GM12878 (cell line): ENCODE measurements at regions of chr16 and their contacts with region 1.

Region 1: DNA sequence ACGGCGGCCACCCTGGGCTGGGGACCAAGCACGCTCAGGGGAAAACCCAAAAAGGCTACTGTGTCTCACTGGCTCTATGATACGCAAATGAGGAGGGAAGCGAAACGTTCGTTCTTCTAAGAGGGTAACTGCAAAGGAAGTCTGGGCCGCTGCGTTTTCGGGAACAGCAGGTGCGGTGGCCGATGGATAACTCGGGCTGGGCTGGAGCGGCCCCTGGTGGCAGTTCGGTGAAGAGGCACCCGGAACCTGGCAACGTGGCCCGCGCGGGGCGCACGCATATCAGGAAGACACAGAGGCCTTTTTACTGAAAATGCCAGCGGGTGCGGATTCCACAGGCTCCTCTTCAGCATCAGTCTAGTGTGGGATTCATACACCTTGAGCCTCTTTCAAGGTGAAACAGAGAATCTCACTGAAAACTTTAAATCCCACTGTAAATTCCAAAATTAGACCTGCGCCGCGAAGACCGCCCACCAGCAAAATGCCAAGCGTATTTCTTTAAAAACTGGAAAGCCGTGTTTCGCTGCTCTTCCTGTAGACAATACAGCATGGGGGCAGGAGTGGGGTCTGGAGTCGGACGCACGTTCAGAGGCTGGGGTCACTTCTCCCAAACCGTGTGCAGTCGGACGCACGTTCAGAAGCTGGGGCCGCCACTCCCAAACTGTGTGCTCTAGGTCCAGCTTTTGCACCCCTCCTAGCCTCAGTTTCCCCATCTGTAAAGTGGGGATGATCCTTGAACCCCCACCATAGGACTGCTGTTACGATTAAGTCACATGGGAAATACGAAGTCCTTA is 44.4 kb upstream of the METTL9 start:
- DNase-seq: peak; percentile 96
- ATAC-seq: peak; percentile 99
- H3K4me3 ChIP-seq: peak overlapping the region; percentile 25; the same call in 1 of the 2 replicates
- H3K27ac ChIP-seq: peak overlapping the region; percentile 43; the same call in 1 of the 2 replicates
- H3K4me1 ChIP-seq: peaks cover 8% of the 10 kb centered on the region
- H3K27me3 ChIP-seq: no peaks in the 10 kb centered on the region
- CTCF ChIP-seq: peak; percentile 98 to 100 (median 99)
- EP300 ChIP-seq: peak in 1 of 2 experiments; percentile 84; a peak in 2 of 4 replicates
- POLR2A ChIP-seq: no peak
- RAD21 ChIP-seq: peak; percentile 99

Region 2: DNA sequence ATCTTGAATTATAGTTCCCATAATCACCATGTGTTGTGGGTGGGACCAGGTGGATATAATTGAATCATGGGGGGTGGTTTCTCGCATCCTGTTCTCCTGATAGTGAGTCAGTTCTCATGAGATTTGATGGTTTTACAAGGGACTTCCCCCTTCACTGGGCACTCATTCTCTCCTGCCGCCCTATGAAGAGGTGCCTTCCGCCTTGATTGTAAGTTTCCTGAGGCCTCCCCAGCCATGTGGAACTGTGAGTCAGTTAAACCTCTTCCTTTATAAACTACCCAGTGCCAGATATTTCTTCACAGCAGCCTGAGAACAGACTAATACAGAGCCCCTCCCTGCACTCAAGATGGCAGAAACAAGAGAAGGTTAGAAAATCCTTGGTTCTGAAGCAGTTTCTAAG is 370.2 kb before region 1 on chr16:
- CTCF ChIA-PET with region 1: interaction called, 9 read pairs
- POLR2A ChIA-PET with region 1: no interaction called
- RAD21 ChIA-PET with region 1: interaction called, 3 read pairs
- SMC1A ChIA-PET with region 1: interaction called, 3 read pairs
- in situ Hi-C with region 1: loop called (anchors 5 kb)
- intact Hi-C with region 1: loop called (anchors 2 kb)
- DNase-seq: no peak
- ATAC-seq: no peak
- H3K4me3 ChIP-seq: no peak overlapping the region
- H3K27ac ChIP-seq: no peak overlapping the region
- H3K4me1 ChIP-seq: peaks cover 6% of the 10 kb centered on the region
- H3K27me3 ChIP-seq: no peaks in the 10 kb centered on the region
- CTCF ChIP-seq: no peak
- EP300 ChIP-seq: no peak
- POLR2A ChIP-seq: no peak
- RAD21 ChIP-seq: no peak

Region 3: GRCh38 chr16:21300309-21301167 is 254.5 kb before region 1 on chr16:
- CTCF ChIA-PET with region 1: interaction called, 5 read pairs
- POLR2A ChIA-PET with region 1: no interaction called
- RAD21 ChIA-PET with region 1: interaction called, 5 read pairs
- SMC1A ChIA-PET with region 1: interaction called, 4 read pairs
- in situ Hi-C with region 1: loop called (anchors 10 kb)
- intact Hi-C with region 1: loop called (anchors 2 kb)
- DNase-seq: peak; percentile 93
- ATAC-seq: peak; percentile 75
- H3K4me3 ChIP-seq: peak overlapping the region; percentile 90
- H3K27ac ChIP-seq: peak overlapping the region; percentile 54
- H3K4me1 ChIP-seq: no peaks in the 10 kb centered on the region
- H3K27me3 ChIP-seq: no peaks in the 10 kb centered on the region
- CTCF ChIP-seq: peak; percentile 71 to 97 (median 77)
- EP300 ChIP-seq: no peak
- POLR2A ChIP-seq: no peak
- RAD21 ChIP-seq: peak; percentile 86

Region 4: GRCh38 chr16:21598206-21598982 is 43.4 kb after region 1 on chr16:
- CTCF ChIA-PET with region 1: no interaction called
- POLR2A ChIA-PET with region 1: no interaction called
- RAD21 ChIA-PET with region 1: no interaction called
- SMC1A ChIA-PET with region 1: no interaction called
- in situ Hi-C with region 1: no loop called
- intact Hi-C with region 1: no loop called
- DNase-seq: no peak
- ATAC-seq: no peak; the same call in 2 of the 3 replicates
- H3K4me3 ChIP-seq: peak overlapping the region; percentile 77
- H3K27ac ChIP-seq: peak overlapping the region; percentile 84
- H3K4me1 ChIP-seq: 0 out of 2 replicates have a peak, but pooled peaks cover 3% of the 10 kb centered on the region
- H3K27me3 ChIP-seq: no peaks in the 10 kb centered on the region
- CTCF ChIP-seq: no peak
- EP300 ChIP-seq: no peak
- POLR2A ChIP-seq: no peak
- RAD21 ChIP-seq: no peak

Region 5: GRCh38 chr16:21608639-21609328 is 53.8 kb after region 1 on chr16:
- CTCF ChIA-PET with region 1: no interaction called
- POLR2A ChIA-PET with region 1: no interaction called
- RAD21 ChIA-PET with region 1: no interaction called
- SMC1A ChIA-PET with region 1: no interaction called
- in situ Hi-C with region 1: no loop called
- intact Hi-C with region 1: no loop called
- DNase-seq: no peak
- ATAC-seq: peak; percentile 71
- H3K4me3 ChIP-seq: no peak overlapping the region
- H3K27ac ChIP-seq: no peak overlapping the region
- H3K4me1 ChIP-seq: peaks cover 22% of the 10 kb centered on the region
- H3K27me3 ChIP-seq: no peaks in the 10 kb centered on the region
- CTCF ChIP-seq: no peak
- EP300 ChIP-seq: no peak
- POLR2A ChIP-seq: no peak
- RAD21 ChIP-seq: no peak

Region 6: GRCh38 chr16:22948603-22949368 is 1393.8 kb after region 1 on chr16:
- CTCF ChIA-PET with region 1: no interaction called
- POLR2A ChIA-PET with region 1: no interaction called
- RAD21 ChIA-PET with region 1: no interaction called
- SMC1A ChIA-PET with region 1: no interaction called
- in situ Hi-C with region 1: loop called (anchors 10 kb)
- intact Hi-C with region 1: no loop called
- DNase-seq: peak; percentile 8
- ATAC-seq: peak; percentile 86
- H3K4me3 ChIP-seq: no peak overlapping the region
- H3K27ac ChIP-seq: no peak overlapping the region
- H3K4me1 ChIP-seq: no peaks in the 10 kb centered on the region
- H3K27me3 ChIP-seq: peaks cover 2 to 5% of the 10 kb centered on the region in 2 experiments; a peak in 3 of 4 replicates
- CTCF ChIP-seq: peak; percentile 65 to 74 (median 72); a peak in 5 of 6 replicates
- EP300 ChIP-seq: no peak
- POLR2A ChIP-seq: no peak
- RAD21 ChIP-seq: peak; percentile 67

Region 7: GRCh38 chr16:23060458-23061320 is 1505.7 kb after region 1 on chr16:
- CTCF ChIA-PET with region 1: no interaction called
- POLR2A ChIA-PET with region 1: no interaction called
- RAD21 ChIA-PET with region 1: interaction called, 3 read pairs
- SMC1A ChIA-PET with region 1: no interaction called
- in situ Hi-C with region 1: loop called (anchors 10 kb)
- intact Hi-C with region 1: loop called (anchors 2 kb)
- DNase-seq: peak; percentile 7
- ATAC-seq: peak; percentile 91
- H3K4me3 ChIP-seq: no peak overlapping the region
- H3K27ac ChIP-seq: no peak overlapping the region
- H3K4me1 ChIP-seq: no peaks in the 10 kb centered on the region
- H3K27me3 ChIP-seq: no peaks in the 10 kb centered on the region
- CTCF ChIP-seq: peak; percentile 78 to 83 (median 79)
- EP300 ChIP-seq: no peak
- POLR2A ChIP-seq: no peak
- RAD21 ChIP-seq: peak; percentile 79